HepG2 (cell line): ENCODE measurements at regions of chr16 and their contacts with region 1.

Region 1: DNA sequence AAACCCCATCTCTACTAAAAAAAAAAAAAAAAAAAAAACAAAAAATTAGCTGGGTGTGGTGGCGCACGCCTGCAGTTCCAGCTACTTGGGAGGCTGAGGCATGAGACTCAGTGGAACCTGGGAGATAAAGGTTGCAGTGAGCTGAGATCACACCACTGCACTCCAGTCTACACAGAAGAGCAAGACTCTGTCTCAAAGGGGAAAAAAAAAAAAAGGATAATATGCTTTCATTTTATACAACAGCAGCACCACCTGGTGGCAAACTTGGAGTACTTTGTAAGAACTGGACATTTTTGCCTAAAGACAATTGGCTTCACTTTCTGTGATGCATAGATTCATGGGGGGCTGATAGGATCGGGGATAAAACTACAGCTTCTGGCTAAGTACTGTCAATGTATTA is 8.5 kb downstream of the CHTF8 start:
- DNase-seq: peak; percentile 85
- ATAC-seq: peak; percentile 62
- H3K4me3 ChIP-seq: no peak overlapping the region
- H3K27ac ChIP-seq: no peak overlapping the region
- H3K4me1 ChIP-seq: peaks cover 13% of the 10 kb centered on the region
- H3K27me3 ChIP-seq: no peaks in the 10 kb centered on the region
- CTCF ChIP-seq: peak; percentile 85
- EP300 ChIP-seq: no peak
- POLR2A ChIP-seq: no peak
- RAD21 ChIP-seq: peak; percentile 82

Region 2: DNA sequence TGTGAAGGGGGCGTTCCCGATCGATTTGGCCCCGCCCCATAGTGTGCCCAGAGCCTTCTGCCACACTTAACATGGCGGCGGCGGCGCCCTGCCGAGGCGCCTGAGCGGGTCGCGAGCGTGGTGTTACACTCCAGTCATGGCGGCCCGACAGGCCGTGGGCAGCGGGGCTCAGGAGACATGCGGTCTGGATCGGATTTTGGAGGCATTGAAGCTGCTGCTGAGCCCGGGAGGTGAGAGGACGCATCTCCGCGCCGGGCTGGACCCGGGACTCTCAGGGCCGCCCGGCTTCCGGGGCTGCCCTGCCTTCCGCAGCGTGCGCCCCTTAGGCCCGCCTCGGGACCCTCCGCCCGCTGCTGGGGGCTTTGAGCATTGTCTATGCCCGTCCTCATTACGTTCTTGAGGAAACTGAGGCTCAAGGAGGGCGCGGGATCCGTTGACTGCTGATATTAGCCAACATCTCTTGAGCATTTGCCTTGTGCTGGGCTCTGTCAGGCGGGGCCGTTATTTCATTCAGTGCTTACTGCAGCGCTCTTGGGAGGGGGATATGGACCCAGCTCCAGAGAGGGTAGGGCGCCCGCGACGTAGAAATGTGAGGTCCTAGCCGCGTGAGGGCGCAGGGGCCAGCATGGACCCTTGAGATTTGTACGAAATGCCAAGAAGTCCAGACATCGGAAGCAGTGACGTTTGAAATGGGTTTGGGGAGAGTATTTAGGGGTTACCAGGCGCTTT is 280.3 kb before region 1 on chr16 and contains the start of gene TANGO6:
- CTCF ChIA-PET with region 1: interaction called, 15 read pairs
- POLR2A ChIA-PET with region 1: interaction called, 7 read pairs
- in situ Hi-C with region 1: loop called (anchors 5 kb)
- intact Hi-C with region 1: loop called (anchors 1 kb)
- DNase-seq: peak; percentile 85
- ATAC-seq: peak; percentile 97
- H3K4me3 ChIP-seq: peak within 1 kb of the TSS; percentile 75 to 97 (median 91)
- H3K27ac ChIP-seq: peak within 1 kb of the TSS; percentile 87
- H3K4me1 ChIP-seq: peaks cover 27% of the 10 kb centered on the region
- H3K27me3 ChIP-seq: no peaks in the 10 kb centered on the region; a peak in 2 of 5 replicates
- CTCF ChIP-seq: peak; percentile 88
- EP300 ChIP-seq: 0 out of 4 replicates have a peak, but pooled peaks of 1 of the 2 experiments have one; percentile 22
- POLR2A ChIP-seq: peak; percentile 85 to 94
- RAD21 ChIP-seq: peak; percentile 53
- total RNA-seq, gene TANGO6: 13.3 and 15.3 TPM in 2 replicates

Region 3: DNA sequence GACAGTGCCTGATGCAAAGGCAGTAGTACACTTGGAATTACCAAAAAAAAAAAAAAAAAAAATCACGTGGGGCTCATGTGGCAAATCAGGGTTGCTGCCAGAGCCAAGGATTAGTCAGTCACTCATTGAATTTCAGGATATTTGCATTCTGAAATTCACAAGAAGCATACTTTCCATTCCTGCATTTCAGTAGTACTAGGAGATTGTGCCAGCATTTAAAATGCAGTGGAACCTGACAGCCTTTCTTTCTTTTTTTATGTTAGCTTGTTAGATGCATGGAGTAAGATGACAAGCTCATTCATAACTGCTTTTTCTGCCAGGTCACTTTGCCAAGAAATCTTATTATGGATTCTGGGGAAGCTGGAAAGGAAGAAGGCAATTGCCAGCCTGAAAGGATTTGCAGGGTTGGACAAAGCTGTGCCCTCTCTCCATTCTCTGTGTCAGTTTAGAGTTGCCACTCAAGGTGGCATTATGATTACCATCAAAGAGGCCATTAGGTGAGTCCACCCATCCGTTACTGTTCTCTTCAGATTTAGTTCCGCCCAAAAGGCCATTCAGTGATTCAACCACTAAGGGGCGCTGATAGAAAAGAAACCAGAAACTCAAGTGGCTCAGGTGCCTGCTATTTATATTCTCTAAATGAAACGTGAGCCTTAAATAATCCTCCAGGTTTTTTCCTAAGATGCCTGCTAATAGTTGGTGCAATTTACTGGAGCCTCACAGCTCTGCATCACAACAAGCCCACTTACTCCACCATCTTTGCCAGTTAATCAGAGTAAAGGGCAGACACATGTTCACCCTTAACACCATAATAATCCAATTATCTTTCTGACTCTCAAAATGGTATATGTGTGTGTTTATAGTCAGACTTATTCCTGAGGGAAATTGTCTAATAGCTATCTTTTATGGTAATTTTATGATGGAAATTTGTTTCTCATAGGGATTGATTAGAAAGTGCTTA is 221.6 kb before region 1 on chr16:
- CTCF ChIA-PET with region 1: interaction called, 23 read pairs
- POLR2A ChIA-PET with region 1: no interaction called
- in situ Hi-C with region 1: loop called (anchors 5 kb)
- intact Hi-C with region 1: loop called (anchors 1 kb)
- DNase-seq: peak; percentile 63
- ATAC-seq: peak; percentile 74
- H3K4me3 ChIP-seq: no peak overlapping the region
- H3K27ac ChIP-seq: no peak overlapping the region
- H3K4me1 ChIP-seq: no peaks in the 10 kb centered on the region
- H3K27me3 ChIP-seq: no peaks in the 10 kb centered on the region
- CTCF ChIP-seq: peak; percentile 80
- EP300 ChIP-seq: no peak
- POLR2A ChIP-seq: no peak
- RAD21 ChIP-seq: peak; percentile 85

Region 4: GRCh38 chr16:69083329-69083941 is 40.5 kb before region 1 on chr16:
- CTCF ChIA-PET with region 1: no interaction called
- POLR2A ChIA-PET with region 1: no interaction called
- in situ Hi-C with region 1: no loop called
- intact Hi-C with region 1: loop called (anchors 1 kb)
- DNase-seq: no peak
- ATAC-seq: peak; percentile 91
- H3K4me3 ChIP-seq: no peak overlapping the region
- H3K27ac ChIP-seq: no peak overlapping the region
- H3K4me1 ChIP-seq: peaks cover under 1% of the 10 kb centered on the region; the same call in 1 of the 2 replicates
- H3K27me3 ChIP-seq: no peaks in the 10 kb centered on the region
- CTCF ChIP-seq: peak; percentile 71
- EP300 ChIP-seq: no peak
- POLR2A ChIP-seq: no peak
- RAD21 ChIP-seq: peak; percentile 61; the same call in 1 of the 2 replicates

Region 5: GRCh38 chr16:69093974-69094373 is 29.9 kb before region 1 on chr16:
- CTCF ChIA-PET with region 1: no interaction called
- POLR2A ChIA-PET with region 1: no interaction called
- in situ Hi-C with region 1: no loop called
- intact Hi-C with region 1: no loop called
- DNase-seq: no peak
- ATAC-seq: no peak
- H3K4me3 ChIP-seq: no peak overlapping the region
- H3K27ac ChIP-seq: no peak overlapping the region
- H3K4me1 ChIP-seq: peaks cover 34% of the 10 kb centered on the region
- H3K27me3 ChIP-seq: no peaks in the 10 kb centered on the region
- CTCF ChIP-seq: no peak
- EP300 ChIP-seq: no peak
- POLR2A ChIP-seq: no peak
- RAD21 ChIP-seq: no peak